Endothelial cell of umbilical vein (primary cell): ENCODE measurements at regions of chr1 and their contacts with region 1.

Region 1: GRCh38 chr1:20151906-20152598 is 12.9 kb downstream of the PLA2G2F start:
- DNase-seq: peak; percentile 42
- H3K4me3 ChIP-seq: peak overlapping the region in 1 of 3 experiments; percentile 7
- H3K27ac ChIP-seq: no peak overlapping the region
- H3K4me1 ChIP-seq: peaks cover 4% of the 10 kb centered on the region
- H3K27me3 ChIP-seq: no peaks in the 10 kb centered on the region
- CTCF ChIP-seq: peak; percentile 87 to 91
- POLR2A ChIP-seq: no peak

Region 2: GRCh38 chr1:18352636-18353265 is 1799.3 kb before region 1 on chr1:
- CTCF ChIA-PET with region 1: no interaction called
- POLR2A ChIA-PET with region 1: no interaction called
- dilution Hi-C with region 1: no loop called
- intact Hi-C with region 1: no loop called
- DNase-seq: no peak
- H3K4me3 ChIP-seq: no peak overlapping the region
- H3K27ac ChIP-seq: no peak overlapping the region
- H3K4me1 ChIP-seq: no peaks in the 10 kb centered on the region
- H3K27me3 ChIP-seq: no peaks in the 10 kb centered on the region
- CTCF ChIP-seq: no peak
- POLR2A ChIP-seq: no peak

Region 3: GRCh38 chr1:19715334-19716203 is 436.5 kb before region 1 on chr1:
- CTCF ChIA-PET with region 1: no interaction called
- POLR2A ChIA-PET with region 1: no interaction called
- dilution Hi-C with region 1: no loop called
- intact Hi-C with region 1: loop called (anchors 1 kb)
- DNase-seq: peak; percentile 97
- H3K4me3 ChIP-seq: no peak overlapping the region
- H3K27ac ChIP-seq: no peak overlapping the region
- H3K4me1 ChIP-seq: no peaks in the 10 kb centered on the region
- H3K27me3 ChIP-seq: no peaks in the 10 kb centered on the region
- CTCF ChIP-seq: peak; percentile 96 to 98
- POLR2A ChIP-seq: no peak

Region 4: DNA sequence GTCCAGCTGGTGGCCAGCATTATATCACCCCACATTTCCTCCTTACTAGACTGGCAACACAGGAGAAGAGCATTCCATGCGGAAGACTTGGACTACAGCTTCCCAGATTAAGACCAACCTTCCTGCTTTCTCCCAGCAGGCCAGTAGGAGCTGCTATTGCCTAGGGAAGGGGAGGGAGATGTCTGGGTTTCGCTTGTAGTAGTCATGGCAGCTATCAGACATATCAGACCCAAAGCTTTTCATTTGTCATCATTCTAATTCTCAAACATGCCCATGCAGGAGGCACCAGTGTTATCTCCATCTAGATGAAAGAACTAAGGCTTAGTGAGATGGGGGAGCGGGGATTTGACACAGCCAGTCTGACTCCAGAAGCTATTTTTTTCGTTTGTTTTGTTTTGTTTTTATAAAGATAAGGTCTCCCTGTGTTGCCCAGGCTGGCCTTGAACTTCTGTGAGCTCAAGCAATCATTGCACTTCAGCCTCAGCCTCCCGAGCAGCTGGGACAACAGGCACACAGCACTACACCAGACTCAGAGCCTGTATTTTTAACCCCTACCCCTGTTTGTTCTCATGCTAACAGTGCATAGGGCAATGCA is 177.1 kb before region 1 on chr1:
- CTCF ChIA-PET with region 1: interaction called, 69 read pairs
- POLR2A ChIA-PET with region 1: no interaction called
- dilution Hi-C with region 1: no loop called
- intact Hi-C with region 1: loop called (anchors 1 kb)
- DNase-seq: peak; percentile 69
- H3K4me3 ChIP-seq: no peak overlapping the region
- H3K27ac ChIP-seq: no peak overlapping the region
- H3K4me1 ChIP-seq: no peaks in the 10 kb centered on the region
- H3K27me3 ChIP-seq: peaks cover 0 to 2% of the 10 kb centered on the region in 2 experiments
- CTCF ChIP-seq: peak; percentile 64 to 69
- POLR2A ChIP-seq: no peak

Region 5: GRCh38 chr1:20100632-20101355 is 51.3 kb before region 1 on chr1:
- CTCF ChIA-PET with region 1: interaction called, 76 read pairs
- POLR2A ChIA-PET with region 1: no interaction called
- dilution Hi-C with region 1: no loop called
- intact Hi-C with region 1: loop called (anchors 1 kb)
- DNase-seq: peak; percentile 43
- H3K4me3 ChIP-seq: no peak overlapping the region
- H3K27ac ChIP-seq: no peak overlapping the region
- H3K4me1 ChIP-seq: no peaks in the 10 kb centered on the region
- H3K27me3 ChIP-seq: peaks cover 0 to 2% of the 10 kb centered on the region in 2 experiments
- CTCF ChIP-seq: peak; percentile 59 to 71
- POLR2A ChIP-seq: no peak

Region 6: DNA sequence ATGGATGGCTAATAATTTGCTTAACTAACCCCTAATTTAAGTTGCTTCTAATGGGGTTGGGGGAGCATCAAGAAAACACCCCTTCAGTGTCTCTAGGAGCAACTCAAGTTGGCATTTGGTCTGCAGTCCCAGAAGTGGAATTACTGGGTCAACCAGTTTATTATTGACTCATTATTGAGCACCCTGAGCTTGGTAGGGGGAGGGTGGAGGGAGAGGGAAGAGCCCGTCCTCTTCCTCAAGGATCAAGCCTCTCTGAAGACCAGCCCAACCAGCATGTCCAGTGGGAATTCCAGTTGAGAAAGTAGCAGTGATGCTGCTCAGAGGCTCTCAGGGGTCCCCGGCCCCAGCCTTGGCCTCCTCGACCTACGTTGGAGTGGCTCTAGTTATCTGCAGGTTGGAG is 15.0 kb before region 1 on chr1:
- CTCF ChIA-PET with region 1: no interaction called
- POLR2A ChIA-PET with region 1: no interaction called
- dilution Hi-C with region 1: no loop called
- intact Hi-C with region 1: no loop called
- DNase-seq: no peak
- H3K4me3 ChIP-seq: no peak overlapping the region
- H3K27ac ChIP-seq: no peak overlapping the region
- H3K4me1 ChIP-seq: no peaks in the 10 kb centered on the region
- H3K27me3 ChIP-seq: no peaks in the 10 kb centered on the region
- CTCF ChIP-seq: no peak
- POLR2A ChIP-seq: no peak

Region 7: DNA sequence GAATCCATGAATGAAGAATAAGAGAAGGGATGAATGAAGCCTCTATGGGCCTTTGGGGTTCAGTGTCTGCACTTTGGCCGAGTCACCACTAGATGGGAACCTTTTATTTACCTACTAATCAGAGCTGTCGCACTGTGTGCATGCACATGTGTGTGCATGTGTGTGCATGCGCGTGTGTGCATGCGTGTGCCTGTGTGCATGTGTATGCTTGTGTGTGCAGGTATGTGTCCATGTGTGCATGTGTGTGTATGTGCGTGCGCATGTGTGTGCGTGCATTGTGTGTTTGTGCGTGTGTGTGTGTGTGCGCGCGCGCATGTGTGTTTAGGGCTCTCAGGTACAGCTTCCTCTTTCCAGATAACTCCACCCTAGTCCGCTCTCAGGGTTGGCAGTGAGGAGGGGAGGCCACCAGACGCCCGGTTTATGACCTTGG is 13.5 kb after region 1 on chr1:
- CTCF ChIA-PET with region 1: interaction called, 14 read pairs
- POLR2A ChIA-PET with region 1: no interaction called
- dilution Hi-C with region 1: no loop called
- intact Hi-C with region 1: no loop called
- DNase-seq: no peak
- H3K4me3 ChIP-seq: no peak overlapping the region
- H3K27ac ChIP-seq: no peak overlapping the region
- H3K4me1 ChIP-seq: no peaks in the 10 kb centered on the region
- H3K27me3 ChIP-seq: no peaks in the 10 kb centered on the region
- CTCF ChIP-seq: peak in 1 of 2 donors; percentile 11
- POLR2A ChIP-seq: no peak